Right ventricle myocardium inferior (tissue), 1 donor: ENCODE measurements at regions of chr10 and their contacts with region 1.

Region 1: DNA sequence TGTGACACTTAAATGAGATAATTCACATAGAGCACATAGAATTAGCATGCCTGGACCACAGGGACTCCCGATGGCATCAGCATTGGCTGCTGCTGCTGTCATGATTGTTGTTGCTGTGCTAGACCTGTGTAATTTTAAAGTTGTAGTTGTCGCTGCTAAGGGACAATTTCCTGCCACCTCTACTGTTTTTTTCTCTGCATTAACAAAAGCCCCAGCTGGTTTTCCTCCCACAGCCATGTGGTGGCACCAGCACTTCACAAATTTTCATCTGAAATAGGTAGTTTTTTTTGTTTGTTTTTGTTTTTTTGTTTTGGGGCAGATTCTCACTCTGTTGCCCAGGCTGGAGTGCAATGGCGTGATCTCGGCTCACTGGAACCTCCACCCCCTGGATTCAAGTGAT is 25.4 kb upstream of the PRXL2A start:
- DNase-seq: no peak
- ATAC-seq: no peak

Region 2: GRCh38 chr10:80504158-80504811 is 121.3 kb after region 1 on chr10:
- intact Hi-C with region 1: loop called (anchors 2 kb)
- DNase-seq: peak; percentile 42
- ATAC-seq: no peak